ENCODE measurements at regions of chr2 and their contacts with region 1.

Region 1: GRCh38 chr2:240566203-240567136 is 1.8 kb upstream of the RNPEPL1 start:
- DNase-seq: peak; percentile 96
- H3K4me3 Mint-ChIP-seq: peak overlapping the region; percentile 92
- H3K27ac Mint-ChIP-seq: peak overlapping the region; percentile 99
- H3K4me1 Mint-ChIP-seq: peaks cover 66% of the 10 kb centered on the region
- H3K27me3 Mint-ChIP-seq: no peaks in the 10 kb centered on the region

Region 2: GRCh38 chr2:239326831-239327535 is 1239.5 kb before region 1 on chr2:
- CTCF ChIA-PET with region 1: no interaction called
- intact Hi-C with region 1: loop called (anchors 5 kb)
- DNase-seq: peak; percentile 94
- H3K4me3 Mint-ChIP-seq: peak overlapping the region; percentile 24
- H3K27ac Mint-ChIP-seq: peak overlapping the region; percentile 81
- H3K4me1 Mint-ChIP-seq: peaks cover 79% of the 10 kb centered on the region
- H3K27me3 Mint-ChIP-seq: no peaks in the 10 kb centered on the region

Region 3: GRCh38 chr2:240513549-240514287 is 52.8 kb before region 1 on chr2:
- CTCF ChIA-PET with region 1: interaction called, 11 read pairs
- intact Hi-C with region 1: loop called (anchors 1 kb)
- DNase-seq: peak; percentile 94
- H3K4me3 Mint-ChIP-seq: no peak overlapping the region
- H3K27ac Mint-ChIP-seq: peak overlapping the region; percentile 84
- H3K4me1 Mint-ChIP-seq: peaks cover 12% of the 10 kb centered on the region
- H3K27me3 Mint-ChIP-seq: no peaks in the 10 kb centered on the region

Region 4: DNA sequence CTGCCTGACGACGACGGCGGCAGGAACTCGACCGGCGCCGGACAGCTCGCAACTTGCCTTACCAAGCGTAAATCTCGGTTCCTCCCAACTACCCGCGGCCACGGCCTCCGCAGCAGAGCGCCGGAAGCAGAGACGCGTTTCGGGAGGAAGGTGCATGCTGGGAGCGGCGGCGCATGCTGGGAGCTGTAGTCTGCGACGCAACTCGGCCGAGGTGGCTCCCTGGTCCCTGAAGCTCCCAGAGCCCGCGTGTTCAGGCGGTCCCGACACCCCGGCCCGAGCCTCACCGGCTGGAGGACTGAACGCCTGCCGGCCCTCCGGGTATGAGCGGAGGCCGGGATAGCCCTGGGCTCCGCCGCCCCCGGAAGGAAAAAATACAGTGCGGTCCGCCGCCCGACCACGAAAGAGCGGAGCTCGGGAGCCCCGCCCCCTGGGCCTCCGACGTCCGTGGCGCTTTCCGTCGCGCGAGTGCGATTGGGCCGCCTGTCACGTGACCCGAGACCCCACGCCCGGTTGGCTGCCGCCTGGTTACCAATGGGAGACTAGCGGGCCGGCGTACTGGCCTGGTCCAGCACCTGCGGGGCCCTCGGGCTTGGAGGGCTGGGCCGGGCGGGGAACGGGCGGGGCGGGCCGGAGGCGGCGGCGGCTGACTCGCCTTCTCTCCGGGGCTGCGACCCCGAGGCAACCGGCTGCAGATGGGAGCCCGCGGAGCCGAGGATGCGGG is 19.9 kb after region 1 on chr2 and contains the start of gene CAPN10:
- CTCF ChIA-PET with region 1: interaction called, 24 read pairs
- intact Hi-C with region 1: loop called (anchors 1 kb)
- DNase-seq: peak; percentile 97
- H3K4me3 Mint-ChIP-seq: peak within 1 kb of the TSS; percentile 92
- H3K27ac Mint-ChIP-seq: peak within 1 kb of the TSS; percentile 86
- H3K4me1 Mint-ChIP-seq: peaks cover 44% of the 10 kb centered on the region
- H3K27me3 Mint-ChIP-seq: no peaks in the 10 kb centered on the region
- total RNA-seq, gene CAPN10: 24.9 to 28.5 TPM

Region 5: GRCh38 chr2:240630656-240631547 is 64.4 kb after region 1 on chr2:
- CTCF ChIA-PET with region 1: no interaction called
- intact Hi-C with region 1: no loop called
- DNase-seq: no peak
- H3K4me3 Mint-ChIP-seq: no peak overlapping the region
- H3K27ac Mint-ChIP-seq: no peak overlapping the region
- H3K4me1 Mint-ChIP-seq: peaks cover 10% of the 10 kb centered on the region
- H3K27me3 Mint-ChIP-seq: no peaks in the 10 kb centered on the region

Region 6: DNA sequence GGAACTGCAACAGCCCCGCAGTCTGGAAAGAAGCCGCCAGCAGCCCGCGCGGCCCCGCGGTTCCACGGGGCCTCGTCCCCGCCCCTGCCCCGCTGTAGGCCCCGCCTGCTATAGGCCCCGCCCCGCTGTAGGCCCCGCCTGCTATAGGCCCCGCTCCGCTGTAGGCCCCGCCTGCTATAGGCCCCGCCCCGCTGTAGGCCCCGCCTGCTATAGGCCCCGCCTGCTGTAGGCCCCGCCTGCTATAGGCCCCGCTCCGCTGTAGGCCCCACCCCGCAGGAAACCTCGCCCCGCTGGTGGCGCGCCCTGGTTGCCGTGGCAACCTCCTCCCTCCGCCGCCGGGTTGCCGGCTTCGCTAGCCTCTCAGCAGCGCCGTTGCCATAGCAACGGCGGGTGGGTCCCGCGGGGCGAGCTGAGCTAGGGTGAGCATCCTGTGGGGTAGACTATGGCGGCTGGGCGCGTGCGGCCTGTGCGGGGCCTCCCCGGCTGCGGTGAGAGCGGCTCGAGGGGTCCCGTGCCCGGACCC is 265.8 kb after region 1 on chr2:
- CTCF ChIA-PET with region 1: no interaction called
- intact Hi-C with region 1: loop called (anchors 1 kb)
- DNase-seq: peak; percentile 96
- H3K4me3 Mint-ChIP-seq: peak overlapping the region; percentile 70
- H3K27ac Mint-ChIP-seq: no peak overlapping the region
- H3K4me1 Mint-ChIP-seq: peaks cover 5% of the 10 kb centered on the region
- H3K27me3 Mint-ChIP-seq: peaks cover 17% of the 10 kb centered on the region

Region 7: DNA sequence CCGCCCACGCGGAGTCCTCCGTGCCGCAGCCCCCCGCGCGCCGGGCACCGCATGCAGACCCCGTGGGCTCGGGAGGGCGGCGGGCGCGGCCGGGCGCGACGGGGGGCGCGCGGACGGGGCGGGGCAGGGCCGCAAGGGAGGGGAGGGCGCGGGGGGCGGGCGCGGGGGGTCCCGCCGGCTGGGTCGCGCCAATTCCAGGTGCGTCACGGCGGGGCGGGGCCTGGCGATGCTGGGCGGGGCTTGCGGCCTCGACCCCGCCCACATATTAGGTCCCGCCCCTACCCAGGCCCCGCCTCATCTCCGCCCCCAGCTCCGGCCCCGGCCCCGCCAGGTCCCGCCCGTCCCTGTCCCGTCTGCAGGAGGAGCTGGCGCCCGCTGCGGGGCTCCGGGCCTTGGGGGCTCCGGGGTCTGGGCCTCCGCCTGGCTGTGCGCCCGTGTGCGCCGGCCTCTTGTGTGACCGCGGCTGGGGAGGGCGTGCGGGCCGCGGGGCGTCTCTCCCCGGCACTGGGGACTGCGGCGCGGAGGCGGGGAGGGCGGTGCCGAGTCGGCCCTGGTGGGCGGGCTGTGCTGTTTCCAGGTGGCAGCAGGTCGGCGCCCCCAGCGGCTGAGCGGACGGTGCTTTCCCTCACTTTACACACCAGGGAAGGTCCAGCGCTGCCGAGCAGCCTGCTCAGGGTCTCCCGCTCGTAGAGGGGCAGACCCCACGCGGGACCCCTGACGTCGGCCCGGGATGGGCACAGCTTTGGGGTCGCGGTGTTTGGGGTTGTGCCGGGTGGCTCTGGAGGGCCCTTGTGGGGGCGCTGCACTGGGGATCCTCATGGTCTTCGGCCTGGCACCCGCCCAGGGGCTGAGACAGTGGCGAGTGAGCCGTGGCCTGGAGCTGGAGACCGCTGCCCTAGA is 1135.9 kb after region 1 on chr2:
- CTCF ChIA-PET with region 1: no interaction called
- intact Hi-C with region 1: loop called (anchors 5 kb)
- DNase-seq: peak; percentile 82
- H3K4me3 Mint-ChIP-seq: peak overlapping the region; percentile 82
- H3K27ac Mint-ChIP-seq: peak overlapping the region; percentile 61
- H3K4me1 Mint-ChIP-seq: peaks cover 24% of the 10 kb centered on the region
- H3K27me3 Mint-ChIP-seq: no peaks in the 10 kb centered on the region

Measured in activated naive CD4-positive, alpha-beta T cell treated with anti-CD3 and anti-CD28 coated beads for 36 hours (primary cell).